PC-9 (cell line): ENCODE measurements at regions of chr5 and their contacts with region 1.

Region 1: DNA sequence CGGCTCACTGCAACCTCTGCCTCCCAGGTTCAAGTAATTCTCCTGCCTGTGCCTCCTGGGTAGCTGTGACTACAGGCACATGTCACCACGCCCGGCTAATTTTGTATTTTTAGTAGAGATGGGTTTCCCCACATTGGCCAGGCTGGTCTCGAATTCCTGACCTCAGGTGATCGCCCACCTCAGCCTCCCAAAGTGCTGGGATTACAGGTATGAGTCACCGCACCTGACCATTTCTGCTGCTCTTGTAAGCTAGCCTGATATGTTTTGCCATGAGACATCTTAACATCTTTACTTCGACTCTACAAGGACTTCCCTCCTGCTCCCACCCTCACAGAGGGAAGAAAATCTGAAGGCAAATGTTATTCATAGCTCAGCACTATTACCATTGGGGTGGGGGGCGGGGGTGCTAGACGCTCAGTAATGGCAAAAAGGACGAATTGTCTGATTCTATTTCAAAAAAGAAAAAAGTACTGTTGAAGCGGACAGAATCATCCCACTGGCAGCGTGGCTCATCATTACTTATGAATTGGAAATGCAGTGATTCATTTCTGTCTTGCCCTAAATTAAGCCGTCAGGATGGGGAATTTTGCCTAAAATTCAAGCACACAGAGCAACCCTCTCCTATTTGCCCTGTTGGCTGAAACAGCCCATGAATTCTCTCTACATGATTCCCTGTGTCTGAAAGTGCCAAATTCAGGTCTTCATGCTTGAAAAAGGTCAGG is 46.4 kb upstream of the WWC1 start:
- DNase-seq: no peak
- H3K4me3 ChIP-seq: no peak overlapping the region
- H3K27ac ChIP-seq: no peak overlapping the region
- H3K4me1 ChIP-seq: no peaks in the 10 kb centered on the region
- H3K27me3 ChIP-seq: peaks cover 59% of the 10 kb centered on the region; the same call in 1 of the 2 replicates
- CTCF ChIP-seq: no peak

Region 2: DNA sequence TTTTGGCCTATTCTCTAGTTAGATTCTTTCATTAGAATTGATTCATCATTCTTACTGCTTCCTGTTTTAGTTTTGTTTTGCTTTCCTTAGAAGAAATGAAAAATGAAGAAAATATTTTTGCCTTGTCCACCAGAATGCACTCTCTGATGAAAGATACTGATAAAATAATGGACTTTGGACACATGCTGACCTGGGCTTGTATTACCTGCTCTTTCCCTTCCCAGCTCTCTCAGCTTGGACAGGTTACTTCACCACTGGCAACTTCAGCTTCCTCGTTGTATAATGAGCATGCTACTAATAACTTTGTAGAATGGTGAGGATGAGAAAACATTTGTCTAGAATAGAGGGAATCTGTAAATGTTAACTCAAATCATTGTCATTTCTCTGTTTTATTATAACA is 1421.6 kb before region 1 on chr5:
- CTCF ChIA-PET with region 1: no interaction called
- POLR2A ChIA-PET with region 1: interaction called, 13 read pairs
- intact Hi-C with region 1: no loop called
- DNase-seq: no peak
- H3K4me3 ChIP-seq: no peak overlapping the region
- H3K27ac ChIP-seq: no peak overlapping the region
- H3K4me1 ChIP-seq: no peaks in the 10 kb centered on the region
- H3K27me3 ChIP-seq: no peaks in the 10 kb centered on the region
- CTCF ChIP-seq: no peak

Region 3: GRCh38 chr5:168268949-168269943 is 24.2 kb after region 1 on chr5:
- CTCF ChIA-PET with region 1: no interaction called
- POLR2A ChIA-PET with region 1: no interaction called
- intact Hi-C with region 1: no loop called
- DNase-seq: peak; percentile 87 to 98
- H3K4me3 ChIP-seq: peak overlapping the region; percentile 47; the same call in 1 of the 2 replicates
- H3K27ac ChIP-seq: peak overlapping the region; percentile 67
- H3K4me1 ChIP-seq: peaks cover 18% of the 10 kb centered on the region
- H3K27me3 ChIP-seq: no peaks in the 10 kb centered on the region
- CTCF ChIP-seq: peak; percentile 97